CD8-positive, alpha-beta T cell (primary cell): ENCODE measurements at regions of chr1 and their contacts with region 1.

Region 1: GRCh38 chr1:204465546-204466415 is 28.8 kb downstream of the PIK3C2B start:
- DNase-seq: no peak
- ATAC-seq: no peak
- H3K4me3 ChIP-seq: no peak overlapping the region
- H3K4me3 Mint-ChIP-seq: no peak overlapping the region
- H3K27ac ChIP-seq: no peak overlapping the region
- H3K27ac Mint-ChIP-seq: peak overlapping the region; percentile 30
- H3K4me1 ChIP-seq: peaks cover 35% of the 10 kb centered on the region
- H3K4me1 Mint-ChIP-seq: peaks cover 45% of the 10 kb centered on the region
- H3K27me3 ChIP-seq: no peaks in the 10 kb centered on the region
- H3K27me3 Mint-ChIP-seq: no peaks in the 10 kb centered on the region
- CTCF ChIP-seq: no peak

Region 2: GRCh38 chr1:204424001-204424400 is 41.8 kb before region 1 on chr1:
- CTCF ChIA-PET with region 1: no interaction called
- POLR2A ChIA-PET with region 1: no interaction called
- intact Hi-C with region 1: no loop called
- DNase-seq: no peak
- ATAC-seq: no peak
- H3K4me3 ChIP-seq: no peak overlapping the region
- H3K4me3 Mint-ChIP-seq: no peak overlapping the region
- H3K27ac ChIP-seq: no peak overlapping the region
- H3K27ac Mint-ChIP-seq: no peak overlapping the region
- H3K4me1 ChIP-seq: no peaks in the 10 kb centered on the region
- H3K4me1 Mint-ChIP-seq: no peaks in the 10 kb centered on the region
- H3K27me3 ChIP-seq: no peaks in the 10 kb centered on the region
- H3K27me3 Mint-ChIP-seq: no peaks in the 10 kb centered on the region
- CTCF ChIP-seq: no peak

Region 3: GRCh38 chr1:204446370-204447111 is 19.2 kb before region 1 on chr1:
- CTCF ChIA-PET with region 1: interaction called, 38 read pairs
- POLR2A ChIA-PET with region 1: no interaction called
- intact Hi-C with region 1: no loop called
- DNase-seq: peak; percentile 58 to 86 (median 81)
- ATAC-seq: peak; percentile 98
- H3K4me3 ChIP-seq: no peak overlapping the region
- H3K4me3 Mint-ChIP-seq: no peak overlapping the region
- H3K27ac ChIP-seq: no peak overlapping the region
- H3K27ac Mint-ChIP-seq: peak overlapping the region; percentile 78
- H3K4me1 ChIP-seq: peaks cover 11% of the 10 kb centered on the region
- H3K4me1 Mint-ChIP-seq: peaks cover 8% of the 10 kb centered on the region
- H3K27me3 ChIP-seq: no peaks in the 10 kb centered on the region
- H3K27me3 Mint-ChIP-seq: no peaks in the 10 kb centered on the region
- CTCF ChIP-seq: peak; percentile 65

Region 4: GRCh38 chr1:204480515-204480914 is 14.7 kb after region 1 on chr1:
- CTCF ChIA-PET with region 1: interaction called, 1,205 read pairs
- POLR2A ChIA-PET with region 1: interaction called, 4 read pairs
- intact Hi-C with region 1: loop called in 1 of 2 experiments (anchors 2 kb)
- DNase-seq: no peak
- ATAC-seq: peak; percentile 48
- H3K4me3 ChIP-seq: no peak overlapping the region
- H3K4me3 Mint-ChIP-seq: no peak overlapping the region
- H3K27ac ChIP-seq: no peak overlapping the region
- H3K27ac Mint-ChIP-seq: no peak overlapping the region
- H3K4me1 ChIP-seq: peaks cover 31% of the 10 kb centered on the region
- H3K4me1 Mint-ChIP-seq: peaks cover 69% of the 10 kb centered on the region
- H3K27me3 ChIP-seq: no peaks in the 10 kb centered on the region
- H3K27me3 Mint-ChIP-seq: no peaks in the 10 kb centered on the region
- CTCF ChIP-seq: no peak